ENCODE measurements at regions of chr1 and their contacts with region 1.

Region 1: GRCh38 chr1:201703621-201704439 is 125.1 kb upstream of the IPO9 start:
- DNase-seq: peak; percentile 73 to 88
- H3K4me3 ChIP-seq: no peak overlapping the region
- H3K27ac ChIP-seq: peak overlapping the region; percentile 43 to 55
- H3K4me1 ChIP-seq: peaks cover 0 to 19% (median 10%) of the 10 kb centered on the region in 4 donors
- H3K27me3 ChIP-seq: no peaks in the 10 kb centered on the region
- CTCF ChIP-seq: peak; percentile 90 to 98

Region 2: GRCh38 chr1:201530741-201531531 is 172.9 kb before region 1 on chr1:
- intact Hi-C with region 1: loop called (anchors 2 kb)
- DNase-seq: peak; percentile 92 to 93
- H3K4me3 ChIP-seq: no peak overlapping the region
- H3K27ac ChIP-seq: peak overlapping the region; percentile 46 to 47
- H3K4me1 ChIP-seq: peaks cover 0 to 40% (median 36%) of the 10 kb centered on the region in 4 donors
- H3K27me3 ChIP-seq: no peaks in the 10 kb centered on the region
- CTCF ChIP-seq: peak; percentile 90 to 94

Region 3: GRCh38 chr1:201559679-201560162 is 144.1 kb before region 1 on chr1:
- intact Hi-C with region 1: loop called (anchors 1 kb)
- DNase-seq: peak; percentile 73 to 85
- H3K4me3 ChIP-seq: no peak overlapping the region
- H3K27ac ChIP-seq: no peak overlapping the region
- H3K4me1 ChIP-seq: peaks cover 0 to 20% (median 7%) of the 10 kb centered on the region in 4 donors
- H3K27me3 ChIP-seq: no peaks in the 10 kb centered on the region
- CTCF ChIP-seq: peak; percentile 89 to 97

Region 4: DNA sequence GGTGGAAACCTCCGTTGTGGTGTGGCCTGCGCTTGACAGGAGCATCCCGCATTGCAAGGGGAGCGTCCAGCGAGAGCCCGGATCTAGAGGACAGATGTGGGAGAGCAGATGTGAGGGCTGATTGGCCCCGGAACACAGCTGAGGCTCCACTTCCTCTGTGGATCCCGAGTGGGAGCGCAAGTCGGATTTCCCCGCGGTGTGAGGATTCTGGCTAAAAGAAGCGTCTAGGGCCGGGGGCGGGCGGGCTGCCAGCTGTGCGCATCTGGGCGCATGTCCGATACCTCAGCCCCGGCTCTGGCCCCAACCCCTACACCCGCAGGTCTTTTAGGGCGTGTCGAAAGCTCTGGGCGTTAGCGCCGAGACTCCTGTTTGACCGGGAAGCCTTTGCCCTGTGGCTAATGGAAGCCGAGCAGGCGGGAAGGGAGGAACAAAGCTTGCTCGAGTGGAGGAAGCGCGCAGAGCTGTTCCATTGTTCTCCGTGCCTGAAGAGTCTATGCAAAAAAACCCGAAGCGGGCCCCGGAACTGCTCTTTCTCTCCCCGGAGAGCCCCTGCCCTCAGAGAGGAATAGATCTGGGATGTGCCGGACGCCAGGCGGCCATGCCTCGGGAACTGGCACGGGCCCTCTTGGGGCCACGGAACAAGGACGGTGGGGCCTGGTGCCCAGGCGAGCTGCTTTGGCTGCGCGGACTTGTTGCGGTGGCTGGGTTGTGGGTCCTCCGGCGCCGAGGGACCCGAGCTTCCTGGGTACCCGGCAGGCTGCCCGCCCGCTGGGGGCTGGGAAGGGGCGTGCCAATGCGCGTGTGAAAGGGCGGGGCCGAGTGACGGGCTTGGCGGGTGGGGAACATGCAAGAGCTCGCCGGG is 53.8 kb before region 1 on chr1:
- intact Hi-C with region 1: no loop called
- DNase-seq: peak; percentile 85 to 88
- H3K4me3 ChIP-seq: peak overlapping the region; percentile 51 to 63
- H3K27ac ChIP-seq: peak overlapping the region; percentile 51 to 59
- H3K4me1 ChIP-seq: peaks cover 0 to 40% (median 33%) of the 10 kb centered on the region in 4 donors
- H3K27me3 ChIP-seq: no peaks in the 10 kb centered on the region
- CTCF ChIP-seq: no peak

Region 5: DNA sequence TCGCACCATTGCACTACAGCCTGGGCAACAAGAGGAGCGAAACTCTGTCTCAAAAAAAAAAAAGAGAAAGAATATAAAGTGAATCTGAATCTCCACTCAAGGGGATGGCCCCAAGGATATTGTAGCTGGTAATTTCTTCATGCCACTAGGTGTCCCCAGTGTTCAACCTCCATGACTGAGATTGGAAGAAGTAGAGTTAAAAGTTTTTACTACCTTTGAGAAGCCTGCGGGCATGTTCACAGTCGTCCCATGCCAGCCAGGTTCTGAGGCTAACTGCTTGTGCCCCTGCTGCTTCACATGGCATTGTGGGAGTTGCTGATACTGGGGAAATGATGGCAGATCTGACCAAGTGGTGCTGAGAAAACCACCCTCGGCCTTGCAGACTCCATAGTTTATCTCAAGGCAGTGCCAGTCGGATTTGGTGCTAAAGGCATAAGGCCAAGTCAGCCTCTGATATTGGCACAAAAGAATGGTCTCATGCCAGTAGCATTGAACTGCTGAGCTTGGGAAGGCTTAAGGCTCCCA is 174.1 kb after region 1 on chr1:
- intact Hi-C with region 1: no loop called
- DNase-seq: peak in 1 of 2 donors; percentile 71
- H3K4me3 ChIP-seq: no peak overlapping the region
- H3K27ac ChIP-seq: peak overlapping the region; percentile 50 to 60
- H3K4me1 ChIP-seq: peaks cover 0 to 15% (median 10%) of the 10 kb centered on the region in 4 donors
- H3K27me3 ChIP-seq: no peaks in the 10 kb centered on the region
- CTCF ChIP-seq: peak; percentile 69 to 80

Measured in tibial artery (tissue), 4 donors.